ENCODE measurements at regions of chr3 and their contacts with region 1.

Region 1: GRCh38 chr3:17233398-17233800 is 348.6 kb downstream of the PLCL2 start:
- DNase-seq: peak; percentile 83
- H3K4me3 ChIP-seq: no peak overlapping the region
- H3K27ac ChIP-seq: no peak overlapping the region
- H3K4me1 ChIP-seq: peaks cover 45% of the 10 kb centered on the region
- CTCF ChIP-seq: peak; percentile 94

Region 2: GRCh38 chr3:17032407-17033034 is 200.9 kb before region 1 on chr3:
- CTCF ChIA-PET with region 1: no interaction called
- POLR2A ChIA-PET with region 1: no interaction called
- intact Hi-C with region 1: loop called (anchors 5 kb)
- DNase-seq: peak; percentile 38
- H3K4me3 ChIP-seq: no peak overlapping the region
- H3K27ac ChIP-seq: no peak overlapping the region
- H3K4me1 ChIP-seq: peaks cover 26% of the 10 kb centered on the region
- CTCF ChIP-seq: peak; percentile 85